ENCODE measurements at regions of chr16 and their contacts with region 1.

Region 1: DNA sequence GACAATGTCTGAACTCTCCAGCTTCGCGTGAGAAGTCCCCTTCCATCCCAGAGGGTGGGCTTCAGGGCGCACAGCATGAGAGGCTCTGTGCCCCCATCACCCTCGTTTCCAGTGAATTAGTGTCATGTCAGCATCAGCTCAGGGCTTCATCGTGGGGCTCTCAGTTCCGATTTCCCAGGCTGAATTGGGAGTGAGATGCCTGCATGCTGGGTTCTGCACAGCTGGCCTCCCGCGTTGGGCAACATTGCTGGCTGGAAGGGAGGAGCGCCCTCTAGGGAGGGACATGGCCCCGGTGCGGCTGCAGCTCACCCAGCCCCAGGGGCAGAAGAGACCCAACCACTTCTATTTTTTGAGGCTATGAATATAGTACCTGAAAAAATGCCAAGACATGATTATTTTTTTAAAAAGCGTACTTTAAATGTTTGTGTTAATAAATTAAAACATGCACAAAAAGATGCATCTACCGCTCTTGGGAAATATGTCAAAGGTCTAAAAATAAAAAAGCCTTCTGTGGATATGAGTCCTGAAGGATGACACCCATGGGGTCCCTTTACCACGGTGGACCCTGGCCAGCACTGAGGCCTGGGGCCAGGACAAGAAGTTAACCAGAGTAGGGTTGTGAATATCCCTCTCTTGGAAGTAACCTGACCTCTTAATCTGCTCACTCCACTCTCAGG is 10.5 kb upstream of the ITGAD start:
- DNase-seq: peak; percentile 68 to 86 (median 76)
- ATAC-seq: peak; percentile 50 to 91 (median 86)
- H3K4me3 ChIP-seq: no peak overlapping the region
- H3K27ac ChIP-seq: no peak overlapping the region
- H3K4me1 ChIP-seq: no peaks in the 10 kb centered on the region
- H3K27me3 ChIP-seq: peaks cover 0 to 27% (median 0%) of the 10 kb centered on the region in 9 donors
- CTCF ChIP-seq: peak; percentile 45 to 74 (median 64)
- POLR2A ChIP-seq: no peak

Region 2: DNA sequence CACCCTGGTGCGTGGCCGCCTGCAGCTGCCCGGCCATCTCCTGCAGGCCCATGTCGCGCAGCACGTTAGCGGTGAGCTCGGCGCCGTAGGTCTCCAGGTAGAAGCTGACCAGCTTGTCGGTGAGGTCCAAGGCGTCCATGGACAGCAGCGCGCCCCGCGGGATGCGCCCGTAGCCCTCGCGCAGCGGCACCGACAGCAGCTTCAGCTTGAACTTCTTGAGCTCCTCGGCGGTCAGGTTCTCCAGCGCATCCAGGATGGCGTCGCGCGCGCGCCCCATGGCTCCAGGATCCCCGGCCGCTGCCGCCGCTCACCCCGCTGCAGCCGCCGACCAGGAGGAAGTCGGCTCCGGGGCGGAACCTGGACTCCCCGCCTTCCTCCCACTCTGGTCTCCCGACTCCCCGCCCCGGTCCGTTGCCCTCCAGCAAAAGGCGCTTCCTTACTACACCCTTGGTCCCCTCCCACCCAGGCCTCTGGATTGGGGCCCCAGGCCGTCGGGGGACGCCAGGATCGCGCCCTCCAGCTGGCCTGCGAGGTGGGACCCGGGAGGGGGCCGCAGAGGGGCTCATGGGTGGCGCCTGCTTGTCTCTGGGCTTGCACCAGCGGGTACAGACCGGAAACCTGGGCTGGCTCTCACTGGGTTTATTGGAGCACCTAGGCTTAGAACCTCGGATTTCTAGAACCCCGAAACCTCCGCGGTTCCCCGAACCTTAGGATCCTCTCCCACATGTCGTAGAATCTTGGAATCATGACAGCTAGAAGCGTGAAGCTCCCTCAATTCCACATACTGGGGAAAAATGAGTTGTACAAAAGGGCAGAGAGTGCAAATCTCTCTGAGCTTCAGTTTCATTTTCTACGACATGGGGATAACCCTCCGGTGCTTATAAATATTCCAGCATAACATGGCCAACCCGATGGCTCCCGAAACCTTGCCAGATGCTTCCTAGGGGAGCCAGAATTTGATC is 179.9 kb before region 1 on chr16 and contains the start of gene PYCARD:
- intact Hi-C with region 1: loop called in 1 of 10 experiments (anchors 10 kb)
- DNase-seq: peak; percentile 70 to 85 (median 73)
- ATAC-seq: peak; percentile 50 to 81 (median 76)
- H3K4me3 ChIP-seq: peak within 1 kb of the TSS; percentile 38 to 91 (median 70)
- H3K27ac ChIP-seq: peak within 1 kb of the TSS in 11 of 12 donors; percentile 19 to 90 (median 53)
- H3K4me1 ChIP-seq: peaks cover 0 to 56% (median 11%) of the 10 kb centered on the region in 12 donors
- H3K27me3 ChIP-seq: no peaks in the 10 kb centered on the region
- CTCF ChIP-seq: no peak
- POLR2A ChIP-seq: no peak
- total RNA-seq, gene PYCARD: 2.0 to 42.2 (median 5.2) TPM

Region 3: DNA sequence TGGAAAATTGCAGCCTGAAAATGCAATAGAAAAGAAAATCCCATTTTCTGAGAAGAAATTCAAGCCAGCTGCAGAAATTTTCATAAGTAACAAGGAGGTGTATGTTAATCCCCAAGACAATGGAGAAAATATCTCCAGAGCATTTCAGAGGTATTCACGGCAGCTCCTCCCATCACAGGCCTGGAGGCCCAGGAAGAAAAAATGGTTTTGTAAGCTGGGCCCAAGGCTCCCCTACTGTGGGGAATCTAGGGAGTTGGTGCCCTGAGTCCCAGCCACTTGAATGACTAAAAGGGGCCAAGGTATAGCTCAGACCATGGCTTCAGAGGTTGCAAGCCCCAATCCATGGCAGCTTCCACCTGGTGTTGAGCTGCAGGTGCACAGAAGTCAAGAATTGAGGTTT is 397.7 kb after region 1 on chr16:
- intact Hi-C with region 1: no loop called
- DNase-seq: no peak
- ATAC-seq: no peak
- H3K4me3 ChIP-seq: no peak overlapping the region
- H3K27ac ChIP-seq: no peak overlapping the region
- H3K4me1 ChIP-seq: no peaks in the 10 kb centered on the region
- H3K27me3 ChIP-seq: no peaks in the 10 kb centered on the region
- CTCF ChIP-seq: no peak
- POLR2A ChIP-seq: no peak